Naive thymus-derived CD4-positive, alpha-beta T cell (primary cell): ENCODE measurements at regions of chr14 and their contacts with region 1.

Region 1: GRCh38 chr14:77320238-77320935 is at the start of gene POMT2:
- DNase-seq: peak; percentile 87 to 94 (median 91)
- ATAC-seq: peak; percentile 71
- H3K4me3 ChIP-seq: peak within 1 kb of the TSS; percentile 97
- H3K4me3 Mint-ChIP-seq: peak within 1 kb of the TSS; percentile 94 to 99 (median 98)
- H3K27ac ChIP-seq: peak within 1 kb of the TSS; percentile 93
- H3K27ac Mint-ChIP-seq: peak within 1 kb of the TSS; percentile 95 to 99 (median 99)
- H3K4me1 ChIP-seq: peaks cover 0 to 6% of the 10 kb centered on the region in 2 donors
- H3K4me1 Mint-ChIP-seq: peaks cover 12 to 21% (median 16%) of the 10 kb centered on the region in 7 donors
- H3K27me3 ChIP-seq: no peaks in the 10 kb centered on the region
- H3K27me3 Mint-ChIP-seq: no peaks in the 10 kb centered on the region
- total RNA-seq, gene POMT2: 6.9 to 15.3 (median 9.4) TPM

Region 2: DNA sequence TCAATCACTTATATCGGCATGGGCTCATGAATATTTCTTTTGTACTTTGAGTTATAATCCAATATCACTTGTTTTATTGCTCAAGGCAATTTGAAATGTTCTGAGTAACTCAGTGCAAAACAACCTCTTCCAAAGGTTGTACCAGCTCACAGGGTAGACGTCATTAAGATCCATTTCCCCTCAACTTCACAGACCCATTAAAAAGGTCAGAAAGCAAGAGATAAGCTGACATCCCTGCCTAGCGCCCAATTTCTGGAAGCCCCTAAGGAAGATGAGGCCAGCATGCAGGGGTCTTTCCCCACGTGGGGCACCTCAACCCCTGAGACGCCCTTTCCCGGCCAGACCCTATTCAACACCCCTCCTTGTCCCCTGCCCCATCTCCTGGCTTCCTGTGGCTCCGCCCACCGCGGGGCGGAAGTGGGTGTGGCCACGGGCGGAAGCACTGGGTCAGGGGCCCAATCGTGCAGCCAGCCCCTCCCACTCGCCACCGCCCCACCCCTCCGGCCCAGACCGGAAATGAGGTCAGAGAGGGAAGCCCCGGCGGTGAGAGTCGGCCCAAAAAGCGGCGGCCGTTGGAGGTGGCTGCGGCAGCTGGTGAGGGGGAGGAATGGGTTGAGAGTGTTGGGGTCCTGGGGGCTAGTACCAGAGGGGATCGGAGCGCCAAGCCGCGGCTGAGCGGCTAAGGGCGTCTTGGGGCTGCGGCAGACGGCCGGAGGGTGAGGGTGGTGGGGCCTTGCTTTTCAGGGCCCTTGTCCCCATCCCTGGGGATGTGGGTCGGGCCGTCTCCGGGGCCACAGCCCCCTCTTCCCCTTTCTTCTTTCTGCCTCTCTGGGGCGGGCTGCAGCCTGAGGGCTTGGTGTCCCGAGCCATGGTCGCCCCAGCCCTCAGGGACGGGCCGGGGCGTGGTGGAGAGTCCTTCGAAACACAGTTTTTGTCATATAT is 1168.7 kb before region 1 on chr14 and contains the start of gene GPATCH2L:
- CTCF ChIA-PET with region 1: no interaction called
- POLR2A ChIA-PET with region 1: no interaction called
- intact Hi-C with region 1: loop called (anchors 2 to 5 kb)
- DNase-seq: peak; percentile 90 to 98 (median 95)
- ATAC-seq: peak; percentile 96
- H3K4me3 ChIP-seq: peak within 1 kb of the TSS; percentile 91
- H3K4me3 Mint-ChIP-seq: peak within 1 kb of the TSS; percentile 89 to 98 (median 95)
- H3K27ac ChIP-seq: peak within 1 kb of the TSS; percentile 95
- H3K27ac Mint-ChIP-seq: peak within 1 kb of the TSS; percentile 86 to 98 (median 96)
- H3K4me1 ChIP-seq: peaks cover 40 to 44% of the 10 kb centered on the region in 2 donors
- H3K4me1 Mint-ChIP-seq: peaks cover 40 to 56% (median 53%) of the 10 kb centered on the region in 7 donors
- H3K27me3 ChIP-seq: no peaks in the 10 kb centered on the region
- H3K27me3 Mint-ChIP-seq: peaks cover 0 to 18% (median 0%) of the 10 kb centered on the region in 5 donors
- total RNA-seq, gene GPATCH2L: 60.4 to 83.1 (median 66.6) TPM

Region 3: DNA sequence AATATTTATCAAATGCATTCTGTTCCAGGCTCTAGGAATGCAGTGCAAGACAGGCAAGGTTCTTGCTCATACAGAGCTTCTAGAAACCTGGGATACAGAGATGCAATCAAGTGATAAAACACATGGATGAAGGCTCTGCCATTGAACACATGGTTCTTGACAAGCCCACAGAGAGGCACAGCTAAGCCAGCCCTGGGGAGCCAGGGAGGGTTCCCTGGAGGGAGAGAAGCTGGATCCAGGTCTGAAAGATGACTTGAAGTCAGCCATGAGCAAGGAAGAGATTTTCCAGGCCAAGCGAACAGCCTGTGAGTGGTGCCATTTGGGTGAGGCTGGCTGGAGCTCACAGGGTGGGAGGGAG is 358.1 kb before region 1 on chr14:
- CTCF ChIA-PET with region 1: no interaction called
- POLR2A ChIA-PET with region 1: no interaction called
- intact Hi-C with region 1: loop called (anchors 2 kb)
- DNase-seq: no peak
- ATAC-seq: no peak
- H3K4me3 ChIP-seq: peak overlapping the region; percentile 82
- H3K4me3 Mint-ChIP-seq: peak overlapping the region; percentile 74 to 86 (median 84)
- H3K27ac ChIP-seq: peak overlapping the region; percentile 87
- H3K27ac Mint-ChIP-seq: peak overlapping the region; percentile 87 to 99 (median 91)
- H3K4me1 ChIP-seq: peaks cover 39 to 59% of the 10 kb centered on the region in 2 donors
- H3K4me1 Mint-ChIP-seq: peaks cover 41 to 89% (median 79%) of the 10 kb centered on the region in 7 donors
- H3K27me3 ChIP-seq: no peaks in the 10 kb centered on the region
- H3K27me3 Mint-ChIP-seq: peaks cover 0 to 8% (median 0%) of the 10 kb centered on the region in 5 donors

Region 4: DNA sequence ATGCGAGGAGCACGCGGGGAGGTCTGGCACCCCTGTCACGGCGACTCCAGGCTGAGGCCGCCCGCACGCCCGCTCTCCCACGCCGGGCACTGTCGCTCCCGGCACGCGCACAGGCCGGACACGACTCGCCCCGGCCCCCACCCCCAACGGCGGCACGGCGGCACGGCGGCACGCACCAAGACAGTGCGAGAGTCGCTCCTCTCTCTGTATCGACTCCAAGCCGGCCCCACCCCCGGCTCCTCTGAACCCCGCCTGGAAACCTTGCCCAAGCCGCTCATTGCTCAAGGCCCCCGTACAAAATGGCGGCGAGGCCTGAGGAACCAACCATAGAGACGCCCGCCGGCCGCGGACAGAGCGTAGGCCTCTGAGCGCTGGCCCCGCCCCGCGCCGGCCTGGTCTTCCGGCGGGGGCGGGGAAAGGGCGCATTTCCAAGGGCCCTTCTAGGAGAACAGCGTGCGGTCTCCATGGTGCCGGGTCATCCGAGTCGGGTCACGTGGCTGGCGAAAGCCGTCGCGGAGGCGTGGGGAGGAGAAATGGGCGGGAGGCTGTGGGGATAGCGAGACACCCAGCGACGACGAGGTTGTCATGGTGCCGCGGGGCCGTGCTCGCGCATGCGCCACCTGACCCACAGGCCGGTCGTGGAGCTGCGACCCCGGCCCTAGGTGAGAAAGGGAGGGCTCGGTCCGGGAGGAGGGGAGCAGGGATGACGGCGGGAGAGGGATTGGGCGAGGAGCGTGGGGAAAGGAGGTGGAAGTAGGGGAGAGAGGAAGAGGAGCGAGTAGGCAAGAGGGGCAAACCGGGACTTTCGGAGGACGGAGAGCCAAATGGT is 222.5 kb before region 1 on chr14 and contains the start of gene CIPC:
- CTCF ChIA-PET with region 1: interaction called, 4 read pairs
- POLR2A ChIA-PET with region 1: interaction called, 5 read pairs
- intact Hi-C with region 1: loop called (anchors 1 kb)
- DNase-seq: peak; percentile 92 to 99 (median 98)
- ATAC-seq: peak; percentile 96
- H3K4me3 ChIP-seq: peak within 1 kb of the TSS; percentile 85
- H3K4me3 Mint-ChIP-seq: peak within 1 kb of the TSS; percentile 84 to 98 (median 90)
- H3K27ac ChIP-seq: peak within 1 kb of the TSS; percentile 97
- H3K27ac Mint-ChIP-seq: peak within 1 kb of the TSS; percentile 83 to 99 (median 97)
- H3K4me1 ChIP-seq: peaks cover 9 to 11% of the 10 kb centered on the region in 2 donors
- H3K4me1 Mint-ChIP-seq: peaks cover 24 to 55% (median 41%) of the 10 kb centered on the region in 7 donors
- H3K27me3 ChIP-seq: no peaks in the 10 kb centered on the region
- H3K27me3 Mint-ChIP-seq: peaks cover 0 to 3% (median 0%) of the 10 kb centered on the region in 5 donors
- total RNA-seq, gene CIPC: 5.5 to 14.2 (median 12.9) TPM

Region 5: GRCh38 chr14:77306851-77307765 is 13.3 kb before region 1 on chr14:
- CTCF ChIA-PET with region 1: interaction called, 11 read pairs
- POLR2A ChIA-PET with region 1: no interaction called
- intact Hi-C with region 1: no loop called
- DNase-seq: no peak
- ATAC-seq: no peak
- H3K4me3 ChIP-seq: no peak overlapping the region
- H3K4me3 Mint-ChIP-seq: no peak overlapping the region
- H3K27ac ChIP-seq: no peak overlapping the region
- H3K27ac Mint-ChIP-seq: no peak overlapping the region
- H3K4me1 ChIP-seq: no peaks in the 10 kb centered on the region
- H3K4me1 Mint-ChIP-seq: peaks cover 0 to 22% (median 6%) of the 10 kb centered on the region in 7 donors
- H3K27me3 ChIP-seq: no peaks in the 10 kb centered on the region
- H3K27me3 Mint-ChIP-seq: no peaks in the 10 kb centered on the region

Region 6: DNA sequence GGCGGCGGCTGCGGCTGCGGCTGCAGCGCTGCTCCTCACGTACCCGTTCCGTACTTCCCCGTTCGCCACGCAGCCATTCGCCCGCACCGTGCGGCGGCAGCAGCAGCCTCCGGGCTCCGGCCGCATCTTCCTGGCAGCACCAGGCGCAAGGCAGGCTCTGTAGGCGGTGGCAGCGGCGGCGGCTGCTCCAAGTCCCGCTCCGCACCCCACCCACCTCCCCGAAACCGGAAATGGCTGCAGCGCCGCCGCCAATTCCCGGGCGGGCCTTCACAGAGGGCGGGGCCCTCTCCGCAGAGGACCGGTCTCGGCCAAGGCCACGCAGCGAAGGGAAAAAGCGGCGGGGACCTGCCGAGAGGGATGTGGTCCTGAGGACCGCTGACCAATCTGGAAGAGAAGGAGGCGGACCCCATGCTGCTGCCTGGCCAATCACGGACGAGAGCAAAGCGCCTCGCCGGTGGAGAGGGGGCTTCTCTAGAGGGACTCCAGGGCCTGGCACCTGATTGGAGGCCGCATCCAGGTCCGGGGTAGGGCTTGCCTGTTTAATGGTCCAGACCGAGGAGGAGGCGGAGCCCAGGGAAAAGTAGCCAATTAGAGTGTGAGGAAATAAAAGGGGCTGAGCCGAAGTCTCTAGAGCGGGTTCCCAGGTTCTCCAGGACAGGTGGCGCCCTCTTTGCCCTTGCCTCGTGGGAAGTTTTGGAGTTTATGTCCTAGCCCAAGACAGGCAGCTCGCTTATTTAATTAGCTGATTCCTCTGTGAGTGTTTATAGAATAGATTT is 296.3 kb after region 1 on chr14 and contains the start of gene SPTLC2:
- CTCF ChIA-PET with region 1: no interaction called
- POLR2A ChIA-PET with region 1: no interaction called
- intact Hi-C with region 1: loop called (anchors 1 kb)
- DNase-seq: peak; percentile 78 to 99 (median 96)
- ATAC-seq: peak; percentile 98
- H3K4me3 ChIP-seq: peak within 1 kb of the TSS; percentile 55
- H3K4me3 Mint-ChIP-seq: peak within 1 kb of the TSS; percentile 85 to 97 (median 92)
- H3K27ac ChIP-seq: peak within 1 kb of the TSS; percentile 69
- H3K27ac Mint-ChIP-seq: peak within 1 kb of the TSS; percentile 45 to 91 (median 86)
- H3K4me1 ChIP-seq: peaks cover 4 to 5% of the 10 kb centered on the region in 2 donors
- H3K4me1 Mint-ChIP-seq: peaks cover 29 to 52% (median 40%) of the 10 kb centered on the region in 7 donors
- H3K27me3 ChIP-seq: no peaks in the 10 kb centered on the region
- H3K27me3 Mint-ChIP-seq: peaks cover 0 to 4% (median 0%) of the 10 kb centered on the region in 5 donors
- total RNA-seq, gene SPTLC2: 19.0 to 58.1 (median 25.7) TPM

Region 7: DNA sequence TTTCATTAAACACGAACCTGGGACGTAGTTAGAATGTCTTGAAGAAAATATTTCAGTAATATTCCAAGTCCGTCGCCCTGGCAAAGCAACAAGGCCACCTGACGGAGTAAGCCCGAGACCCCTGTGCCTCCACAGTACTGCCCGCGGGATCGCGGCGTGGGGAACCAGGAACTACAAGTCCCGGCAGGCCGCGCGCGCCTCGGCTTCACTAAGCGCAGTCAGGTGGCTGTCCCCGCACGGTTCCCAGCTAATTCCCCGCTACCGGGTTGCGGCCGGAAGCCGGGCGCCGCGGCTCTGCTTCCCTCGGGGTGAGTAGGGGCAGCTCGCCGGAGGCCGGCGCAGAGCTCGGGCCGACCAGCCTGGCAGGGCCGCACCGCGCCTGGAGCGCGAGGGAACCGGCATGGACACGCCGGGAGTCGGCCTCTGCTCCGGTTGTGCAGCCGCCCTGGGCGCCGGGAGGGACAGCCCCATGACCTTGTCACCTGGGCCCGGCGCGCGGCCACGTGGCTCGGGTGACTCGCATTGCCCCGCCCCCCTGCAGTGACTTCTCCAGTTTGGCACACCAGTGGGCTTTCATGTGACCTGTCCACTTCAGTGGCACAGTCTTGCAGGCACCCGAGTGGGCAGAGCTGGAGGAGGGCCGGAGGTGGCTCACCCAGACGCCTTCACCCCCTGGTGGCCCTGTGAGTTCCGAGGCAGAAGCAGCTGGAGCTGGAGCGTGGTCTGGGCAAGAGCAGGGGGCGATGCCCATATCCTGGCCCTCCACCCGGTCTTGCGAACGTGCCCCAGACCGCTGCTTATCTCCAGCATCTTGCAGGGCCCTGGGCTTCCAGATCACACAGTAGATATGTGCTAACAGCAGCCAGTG is 479.7 kb after region 1 on chr14 and contains the start of gene ADCK1:
- CTCF ChIA-PET with region 1: no interaction called
- POLR2A ChIA-PET with region 1: interaction called, 5 read pairs
- intact Hi-C with region 1: loop called (anchors 1 kb)
- DNase-seq: peak; percentile 74 to 87 (median 84)
- ATAC-seq: peak; percentile 94
- H3K4me3 ChIP-seq: peak within 1 kb of the TSS; percentile 71
- H3K4me3 Mint-ChIP-seq: peak within 1 kb of the TSS; percentile 83 to 89 (median 87)
- H3K27ac ChIP-seq: peak within 1 kb of the TSS; percentile 81
- H3K27ac Mint-ChIP-seq: peak within 1 kb of the TSS; percentile 34 to 92 (median 78)
- H3K4me1 ChIP-seq: no peaks in the 10 kb centered on the region
- H3K4me1 Mint-ChIP-seq: peaks cover 0 to 17% (median 6%) of the 10 kb centered on the region in 7 donors
- H3K27me3 ChIP-seq: no peaks in the 10 kb centered on the region
- H3K27me3 Mint-ChIP-seq: no peaks in the 10 kb centered on the region
- total RNA-seq, gene ADCK1: 4.5 to 10.6 (median 10.3) TPM